PC-9 (cell line): ENCODE measurements at regions of chr4 and their contacts with region 1.

Region 1: DNA sequence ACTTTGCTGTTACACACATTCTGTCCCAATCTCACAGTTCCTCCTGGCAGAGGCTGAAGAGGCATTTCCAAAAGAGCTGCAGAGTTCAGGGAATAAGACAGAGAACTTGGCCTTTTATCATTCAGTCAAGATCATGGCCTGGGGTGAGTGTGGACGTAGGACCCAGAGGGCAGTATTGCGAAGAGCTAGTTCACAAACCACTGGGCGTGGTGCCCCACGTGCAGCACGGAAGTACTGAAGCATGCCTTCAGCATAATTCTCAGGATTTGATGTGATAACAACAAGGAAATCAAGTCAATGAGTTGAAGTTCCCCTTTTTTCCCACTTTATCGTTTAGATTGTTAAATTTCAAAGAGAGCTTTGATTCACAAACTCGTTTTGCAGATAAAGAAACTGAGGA is 117.7 kb downstream of the RELL1 start:
- DNase-seq: no peak
- H3K4me3 ChIP-seq: no peak overlapping the region
- H3K27ac ChIP-seq: no peak overlapping the region
- H3K4me1 ChIP-seq: no peaks in the 10 kb centered on the region
- H3K27me3 ChIP-seq: no peaks in the 10 kb centered on the region
- CTCF ChIP-seq: no peak

Region 2: DNA sequence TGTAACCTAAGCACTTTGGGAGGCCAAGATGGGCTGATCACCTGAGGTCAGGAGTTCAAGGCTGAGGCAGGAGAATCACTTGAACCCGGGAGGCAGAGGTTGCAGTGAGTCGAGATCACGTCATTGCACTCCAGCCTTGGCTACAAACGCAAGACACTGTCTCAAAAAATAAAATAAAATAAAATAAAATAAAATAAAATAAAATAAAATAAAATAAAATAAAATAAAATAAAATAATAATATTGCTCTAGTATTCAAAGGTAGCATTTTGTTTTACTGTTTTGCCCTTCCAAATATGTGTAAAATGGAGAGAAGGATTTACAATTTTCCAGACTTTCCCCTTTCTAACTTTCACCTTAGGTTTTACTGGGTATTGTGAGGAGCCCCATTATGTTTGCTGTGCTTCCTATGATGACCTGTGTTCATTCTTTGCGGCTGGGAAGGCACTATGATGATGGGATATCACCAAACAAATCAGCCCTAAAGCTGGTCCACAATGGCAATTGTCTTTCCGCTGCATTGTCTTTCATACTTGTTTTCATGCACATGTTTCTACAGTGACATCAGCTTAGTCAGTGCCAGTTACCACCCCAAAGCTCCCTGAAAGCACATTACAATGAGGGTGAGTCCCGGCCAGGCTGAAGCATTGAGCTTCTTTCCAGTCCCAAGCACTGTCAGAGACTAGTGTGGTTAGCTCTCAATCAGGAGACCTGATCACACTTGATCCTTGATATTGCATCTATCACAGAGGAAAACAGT is 1236.3 kb before region 1 on chr4:
- CTCF ChIA-PET with region 1: no interaction called
- POLR2A ChIA-PET with region 1: interaction called, 11 read pairs
- intact Hi-C with region 1: no loop called
- DNase-seq: no peak
- H3K4me3 ChIP-seq: no peak overlapping the region
- H3K27ac ChIP-seq: no peak overlapping the region
- H3K4me1 ChIP-seq: no peaks in the 10 kb centered on the region; the same call in 1 of the 2 replicates
- H3K27me3 ChIP-seq: no peaks in the 10 kb centered on the region
- CTCF ChIP-seq: no peak

Region 3: DNA sequence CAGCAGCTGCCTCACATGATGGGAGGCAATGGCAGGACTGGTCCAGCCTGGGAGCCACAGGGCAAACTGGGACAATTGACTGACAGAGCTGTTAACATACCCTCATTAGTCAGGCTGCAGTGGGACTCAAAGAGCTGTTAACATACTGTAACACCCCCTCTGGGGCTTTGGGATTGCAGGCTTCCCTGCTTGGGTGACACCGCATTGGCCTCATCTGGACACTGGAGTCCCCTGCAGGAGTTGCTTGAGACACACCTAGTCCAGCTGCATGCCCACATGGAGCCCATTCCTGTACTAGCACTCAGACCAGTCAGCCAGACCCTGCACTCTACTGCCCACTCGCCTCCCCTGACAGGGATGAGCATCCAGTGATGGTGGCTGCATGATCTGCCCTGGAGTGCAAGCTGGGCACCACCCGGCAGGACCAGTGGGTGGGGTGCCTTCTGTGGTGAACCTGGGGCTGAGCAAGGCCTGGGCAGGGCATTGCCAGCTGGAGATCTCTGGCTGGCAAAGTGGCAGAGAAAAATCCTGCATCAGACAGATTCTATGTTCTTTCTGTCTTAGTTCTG is 1148.3 kb before region 1 on chr4:
- CTCF ChIA-PET with region 1: no interaction called
- POLR2A ChIA-PET with region 1: interaction called, 10 read pairs
- intact Hi-C with region 1: no loop called
- DNase-seq: no peak
- H3K4me3 ChIP-seq: no peak overlapping the region
- H3K27ac ChIP-seq: no peak overlapping the region
- H3K4me1 ChIP-seq: no peaks in the 10 kb centered on the region
- H3K27me3 ChIP-seq: no peaks in the 10 kb centered on the region
- CTCF ChIP-seq: no peak

Region 4: GRCh38 chr4:37415845-37416369 is 152.6 kb before region 1 on chr4:
- CTCF ChIA-PET with region 1: no interaction called
- POLR2A ChIA-PET with region 1: no interaction called
- intact Hi-C with region 1: no loop called
- DNase-seq: no peak
- H3K4me3 ChIP-seq: no peak overlapping the region
- H3K27ac ChIP-seq: no peak overlapping the region
- H3K4me1 ChIP-seq: no peaks in the 10 kb centered on the region
- H3K27me3 ChIP-seq: no peaks in the 10 kb centered on the region
- CTCF ChIP-seq: no peak